Activated CD8-positive, alpha-beta T cell treated with anti-CD3 and anti-CD28 coated beads, Interleukin-2, amount 10 ng/mL, durations not matched to agents 7 days and 5 days (primary cell): ENCODE measurements at regions of chr2 and their contacts with region 1.

Region 1: DNA sequence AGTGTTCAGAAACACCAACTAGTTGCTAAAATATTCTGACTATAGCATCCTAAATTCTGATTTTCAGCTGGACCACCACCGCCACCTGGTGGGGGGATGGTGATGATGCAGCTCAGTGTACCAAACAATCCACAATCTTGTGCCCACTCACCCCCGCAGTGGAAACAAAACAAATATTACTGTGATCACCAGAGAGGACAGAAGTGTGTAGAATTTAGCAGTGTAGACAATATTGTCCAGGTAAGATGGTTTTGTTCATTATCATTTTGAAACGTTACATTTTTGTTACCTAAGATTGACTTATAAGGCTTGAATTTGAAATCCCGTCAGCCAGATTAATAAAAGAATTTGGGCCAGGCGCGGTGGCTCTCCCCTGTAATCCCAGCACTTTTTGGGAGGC is 31.7 kb upstream of the UBXN4 start:
- DNase-seq: peak; percentile 80
- ATAC-seq: peak; percentile 76
- H3K4me3 Mint-ChIP-seq: no peak overlapping the region
- H3K27ac Mint-ChIP-seq: no peak overlapping the region
- H3K4me1 Mint-ChIP-seq: no peaks in the 10 kb centered on the region
- H3K27me3 Mint-ChIP-seq: no peaks in the 10 kb centered on the region

Region 2: DNA sequence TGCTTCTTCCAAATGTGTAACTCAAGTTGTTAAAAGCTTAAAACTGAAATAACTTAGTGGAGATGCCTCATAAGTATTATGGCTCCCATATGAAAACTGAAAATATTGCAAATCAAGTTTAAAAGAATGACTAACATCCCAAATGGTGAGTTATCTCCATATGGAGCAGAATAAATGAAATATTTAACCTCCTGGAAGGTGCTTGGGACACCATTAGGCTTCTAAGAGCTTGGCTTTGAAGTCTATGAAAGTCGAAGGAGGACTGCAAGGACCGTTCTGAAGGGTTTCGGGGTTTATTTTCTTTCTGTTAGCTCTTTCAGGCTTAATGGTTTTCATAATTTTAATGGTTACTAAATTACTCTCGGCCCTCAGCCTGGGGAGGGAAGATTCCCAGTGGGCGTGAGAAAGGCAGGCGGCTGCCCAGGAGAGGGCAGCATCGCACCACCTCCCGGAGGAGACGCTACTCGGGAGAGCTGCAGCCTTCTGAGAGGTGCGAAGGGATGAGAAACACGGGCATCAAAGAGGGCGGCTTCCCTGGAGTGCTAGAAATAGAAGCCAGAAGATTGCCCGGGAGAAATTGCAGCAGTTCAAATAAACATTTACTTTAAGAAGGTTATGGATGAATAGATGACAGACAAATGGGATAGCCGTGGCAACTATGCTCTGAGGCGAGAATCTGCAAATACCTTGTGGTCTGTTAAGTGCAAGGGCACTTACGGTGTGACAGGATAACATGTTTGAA is 705.8 kb before region 1 on chr2:
- CTCF ChIA-PET with region 1: interaction called, 108 read pairs
- POLR2A ChIA-PET with region 1: no interaction called
- DNase-seq: peak; percentile 75
- ATAC-seq: peak; percentile 96
- H3K4me3 Mint-ChIP-seq: no peak overlapping the region
- H3K27ac Mint-ChIP-seq: no peak overlapping the region
- H3K4me1 Mint-ChIP-seq: peaks cover 4% of the 10 kb centered on the region
- H3K27me3 Mint-ChIP-seq: peaks cover 8% of the 10 kb centered on the region

Region 3: DNA sequence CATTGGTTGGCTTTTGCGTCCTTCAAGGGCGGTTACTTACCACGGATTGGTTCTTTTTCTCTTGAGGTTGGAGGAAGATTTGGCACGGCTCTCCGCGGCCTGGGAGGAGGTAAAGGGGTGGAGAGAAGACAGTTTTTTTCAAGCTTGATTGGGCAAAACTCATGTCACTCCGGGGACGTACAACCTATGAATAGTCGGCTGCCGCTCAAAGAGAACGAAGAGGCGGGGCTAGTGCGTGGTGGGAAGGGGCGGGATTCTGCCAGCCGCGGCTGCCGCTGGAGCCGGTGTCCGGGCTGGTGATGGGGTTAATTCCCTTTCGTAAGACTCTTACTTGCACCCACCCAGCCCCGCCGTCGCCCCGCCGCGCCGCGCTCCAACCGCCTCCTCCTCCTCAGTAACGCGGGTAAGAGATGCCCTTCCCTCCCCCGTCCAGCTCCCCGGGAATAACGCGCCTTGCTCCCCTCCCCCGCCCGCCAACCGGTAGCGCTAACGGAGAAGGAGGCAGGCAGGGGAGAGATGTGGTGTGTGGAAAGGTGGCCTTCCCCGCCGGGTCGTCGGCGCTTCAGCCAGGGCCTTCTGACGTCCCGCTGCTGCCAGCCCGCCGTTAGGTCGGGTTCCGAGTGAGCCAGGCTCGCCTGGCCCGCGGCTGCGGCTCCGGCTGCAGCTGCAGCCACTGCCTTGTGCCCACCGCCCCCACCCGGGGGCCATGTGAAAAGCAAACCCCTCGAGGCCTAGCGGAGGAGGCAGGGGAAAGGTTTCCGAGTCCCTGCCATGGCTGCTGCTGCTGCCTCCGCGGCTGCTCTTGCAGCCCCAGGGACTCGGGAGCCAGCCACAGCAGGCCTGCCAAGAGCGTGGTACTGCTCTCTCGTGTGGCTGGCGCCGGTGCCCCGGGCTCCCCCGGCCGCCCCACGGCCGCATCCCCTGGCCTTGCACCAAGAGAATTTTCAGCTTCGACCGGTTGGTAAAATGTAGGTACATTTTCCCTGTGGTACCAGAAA is 178.5 kb before region 1 on chr2 and contains the start of gene R3HDM1:
- CTCF ChIA-PET with region 1: interaction called, 16 read pairs
- POLR2A ChIA-PET with region 1: no interaction called
- DNase-seq: peak; percentile 98
- ATAC-seq: peak; percentile 87
- H3K4me3 Mint-ChIP-seq: no peak within 1 kb of the TSS
- H3K27ac Mint-ChIP-seq: no peak within 1 kb of the TSS
- H3K4me1 Mint-ChIP-seq: peaks cover 37% of the 10 kb centered on the region
- H3K27me3 Mint-ChIP-seq: no peaks in the 10 kb centered on the region
- total RNA-seq, gene R3HDM1: 51.9 to 53.9 TPM

Region 4: GRCh38 chr2:135657806-135658582 is 52.0 kb before region 1 on chr2:
- CTCF ChIA-PET with region 1: interaction called, 10 read pairs
- POLR2A ChIA-PET with region 1: no interaction called
- DNase-seq: peak; percentile 87
- ATAC-seq: peak; percentile 93
- H3K4me3 Mint-ChIP-seq: peak overlapping the region; percentile 76
- H3K27ac Mint-ChIP-seq: peak overlapping the region; percentile 97
- H3K4me1 Mint-ChIP-seq: peaks cover 35% of the 10 kb centered on the region
- H3K27me3 Mint-ChIP-seq: no peaks in the 10 kb centered on the region